Activated CD4-positive, alpha-beta memory T cell treated with anti-CD3 and anti-CD28 coated beads, Interleukin-2, amount 10 ng/mL, durations not matched to agents 7 days and 5 days (primary cell): ENCODE measurements at regions of chr10 and their contacts with region 1.

Region 1: DNA sequence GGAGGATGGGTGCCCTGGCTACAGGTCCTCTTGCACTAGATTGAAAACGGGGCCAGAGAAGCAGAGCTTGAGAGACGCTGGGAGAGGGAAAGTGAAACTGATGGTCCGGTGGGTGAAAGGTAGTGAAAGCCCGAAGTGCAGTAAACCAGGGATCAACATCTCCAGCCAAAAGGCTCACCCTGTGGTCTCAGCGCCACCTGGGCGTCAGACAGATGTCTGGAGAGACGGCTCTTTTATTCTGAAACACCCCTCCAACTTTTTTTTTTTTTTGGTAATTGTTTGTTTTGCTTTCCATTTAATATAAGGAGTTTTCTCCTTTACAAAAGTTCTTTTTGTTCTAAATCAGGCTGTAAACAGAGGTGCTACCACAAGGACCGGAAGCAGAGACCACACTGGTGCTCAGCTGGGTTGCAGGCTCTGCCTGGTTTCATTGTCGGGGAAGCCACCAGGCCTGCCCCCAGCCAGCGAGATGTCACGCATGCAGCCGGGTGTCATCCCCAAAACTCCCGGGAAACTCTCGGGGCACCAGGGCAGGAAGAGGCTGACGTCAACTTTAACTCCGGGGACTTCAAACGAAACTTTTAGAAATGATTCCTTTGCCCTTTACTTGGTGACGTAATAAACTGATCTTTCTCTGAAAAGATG is 11.2 kb downstream of the IL2RA start:
- DNase-seq: peak; percentile 94
- H3K4me3 Mint-ChIP-seq: peak overlapping the region; percentile 80
- H3K27ac Mint-ChIP-seq: peak overlapping the region; percentile 97
- H3K4me1 Mint-ChIP-seq: peaks cover 86% of the 10 kb centered on the region
- H3K27me3 Mint-ChIP-seq: no peaks in the 10 kb centered on the region

Region 2: DNA sequence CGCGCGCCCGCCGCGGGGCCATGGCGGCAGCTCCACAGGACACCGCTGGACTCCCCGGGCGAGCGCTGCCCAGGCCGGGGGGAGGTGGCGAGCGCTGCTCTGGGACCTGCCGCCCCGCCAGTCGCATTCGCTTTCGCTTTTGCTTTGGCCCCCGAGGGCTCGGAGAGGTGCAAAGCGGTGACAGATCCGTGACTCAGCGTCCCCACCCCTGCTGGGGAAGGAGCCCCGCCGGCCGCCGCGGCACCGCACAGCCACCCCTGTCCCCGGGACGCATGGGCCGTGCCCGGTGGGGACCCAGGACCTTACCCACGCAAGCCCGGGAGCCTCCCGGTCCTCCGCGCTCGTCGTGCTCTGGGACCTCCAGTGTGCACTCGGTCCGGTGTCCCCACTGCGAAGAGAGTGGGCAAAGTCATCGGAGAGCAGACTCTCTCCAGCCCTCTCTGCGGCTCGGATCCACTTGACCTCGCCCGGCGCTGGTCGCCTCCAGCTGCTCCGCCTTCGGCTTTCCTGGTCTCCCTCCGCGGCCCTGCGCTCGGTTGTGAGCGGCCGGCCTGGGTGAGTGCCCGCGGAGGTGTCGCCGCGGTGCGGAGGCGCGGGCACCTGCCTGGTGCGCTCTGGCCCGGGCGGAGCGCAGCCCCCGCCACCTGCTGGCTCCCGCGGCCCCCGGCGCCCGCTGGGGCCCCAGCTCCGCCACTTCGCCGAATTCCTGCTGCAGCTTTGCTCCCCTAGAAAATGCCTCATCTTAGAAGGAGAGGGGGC is 73.3 kb before region 1 on chr10 and contains the start of gene IL15RA:
- CTCF ChIA-PET with region 1: interaction called, 3 read pairs
- POLR2A ChIA-PET with region 1: interaction called, 20 read pairs
- DNase-seq: peak; percentile 91
- H3K4me3 Mint-ChIP-seq: peak within 1 kb of the TSS; percentile 91
- H3K27ac Mint-ChIP-seq: peak within 1 kb of the TSS; percentile 95
- H3K4me1 Mint-ChIP-seq: peaks cover 30% of the 10 kb centered on the region
- H3K27me3 Mint-ChIP-seq: no peaks in the 10 kb centered on the region
- total RNA-seq, gene IL15RA: 22.1 to 24.5 TPM

Region 3: GRCh38 chr10:6033954-6034353 is 17.0 kb before region 1 on chr10:
- CTCF ChIA-PET with region 1: interaction called, 11 read pairs
- POLR2A ChIA-PET with region 1: interaction called, 90 read pairs
- DNase-seq: no peak
- H3K4me3 Mint-ChIP-seq: no peak overlapping the region
- H3K27ac Mint-ChIP-seq: peak overlapping the region; percentile 48
- H3K4me1 Mint-ChIP-seq: peaks cover 74% of the 10 kb centered on the region
- H3K27me3 Mint-ChIP-seq: no peaks in the 10 kb centered on the region

Region 4: GRCh38 chr10:6062101-6062771 is 11.3 kb after region 1 on chr10 and contains the start of gene IL2RA:
- CTCF ChIA-PET with region 1: interaction called, 5 read pairs
- POLR2A ChIA-PET with region 1: interaction called, 448 read pairs
- DNase-seq: peak; percentile 77
- H3K4me3 Mint-ChIP-seq: peak within 1 kb of the TSS; percentile 90
- H3K27ac Mint-ChIP-seq: peak within 1 kb of the TSS; percentile 90
- H3K4me1 Mint-ChIP-seq: peaks cover 71% of the 10 kb centered on the region
- H3K27me3 Mint-ChIP-seq: no peaks in the 10 kb centered on the region
- total RNA-seq, gene IL2RA: 437 to 446 TPM

Region 5: DNA sequence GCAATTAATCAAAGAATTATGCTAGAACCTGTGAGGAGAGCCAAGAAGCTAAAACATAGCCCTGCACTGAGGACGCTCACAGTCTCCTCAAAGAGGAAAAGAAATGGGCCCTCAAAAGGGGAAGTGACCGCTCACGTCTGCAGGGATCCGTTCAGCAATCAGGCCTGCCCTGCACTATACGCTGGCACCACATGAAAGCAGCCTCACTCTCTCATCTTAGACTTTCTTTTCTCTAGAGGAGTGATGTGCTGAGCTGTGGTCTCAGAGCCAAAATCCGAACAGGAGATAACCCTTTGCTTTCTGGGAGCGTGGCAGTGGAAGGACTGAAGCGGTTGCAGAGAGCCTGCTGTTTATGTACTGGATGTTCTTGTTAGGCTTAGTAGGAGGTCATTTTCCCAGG is 17.5 kb after region 1 on chr10:
- CTCF ChIA-PET with region 1: interaction called, 8 read pairs
- POLR2A ChIA-PET with region 1: interaction called, 448 read pairs
- DNase-seq: peak; percentile 50
- H3K4me3 Mint-ChIP-seq: peak overlapping the region; percentile 67
- H3K27ac Mint-ChIP-seq: peak overlapping the region; percentile 96
- H3K4me1 Mint-ChIP-seq: peaks cover 97% of the 10 kb centered on the region
- H3K27me3 Mint-ChIP-seq: no peaks in the 10 kb centered on the region

Region 6: DNA sequence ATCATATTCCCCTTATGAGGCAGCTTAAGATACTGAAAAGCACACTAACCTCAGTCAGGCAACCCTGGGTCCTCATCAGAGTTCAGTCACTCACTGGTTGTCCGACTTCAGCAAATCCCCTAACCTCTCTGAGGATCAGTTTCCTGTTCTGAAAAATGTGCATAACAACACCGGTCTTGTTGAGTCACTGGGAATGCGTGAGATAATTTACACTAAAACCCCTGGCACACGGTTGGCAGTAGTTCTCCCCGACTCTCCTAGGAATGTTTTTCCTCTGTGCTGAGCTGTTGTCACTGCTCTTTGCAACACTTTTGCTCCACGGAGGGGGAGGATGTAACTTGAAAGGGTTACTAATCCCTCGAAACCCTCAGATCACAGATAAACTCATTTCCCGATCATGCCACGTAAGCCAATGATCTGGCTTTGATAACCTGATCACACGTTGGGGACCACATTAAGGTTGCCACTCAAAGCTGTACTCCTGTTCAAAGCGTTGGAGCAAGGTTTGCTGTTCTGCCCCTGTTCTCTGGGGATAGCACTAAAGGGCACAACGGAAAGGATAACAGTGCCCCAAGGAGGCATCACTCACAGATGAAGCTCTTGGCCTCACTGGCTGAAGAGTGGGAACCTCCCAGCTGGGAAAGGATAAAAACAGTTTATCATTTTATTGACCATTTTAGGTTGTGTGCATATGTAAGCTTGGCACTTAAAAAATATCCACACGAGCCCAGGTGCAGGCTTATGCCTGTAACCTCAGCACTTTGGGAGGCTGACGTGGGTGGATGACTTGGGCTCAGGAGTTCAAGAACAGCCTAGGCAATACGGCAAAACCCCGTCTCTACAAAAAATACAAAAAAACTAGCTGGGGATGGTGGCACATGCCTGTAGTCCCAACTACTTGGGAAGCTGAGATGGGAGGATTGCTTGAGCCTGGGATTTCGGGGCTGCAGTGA is 32.9 kb after region 1 on chr10:
- CTCF ChIA-PET with region 1: interaction called, 58 read pairs
- POLR2A ChIA-PET with region 1: interaction called, 73 read pairs
- DNase-seq: peak; percentile 77
- H3K4me3 Mint-ChIP-seq: peak overlapping the region; percentile 68
- H3K27ac Mint-ChIP-seq: peak overlapping the region; percentile 86
- H3K4me1 Mint-ChIP-seq: peaks cover 74% of the 10 kb centered on the region
- H3K27me3 Mint-ChIP-seq: no peaks in the 10 kb centered on the region